ENCODE measurements at regions of chr10 and their contacts with region 1.

Region 1: DNA sequence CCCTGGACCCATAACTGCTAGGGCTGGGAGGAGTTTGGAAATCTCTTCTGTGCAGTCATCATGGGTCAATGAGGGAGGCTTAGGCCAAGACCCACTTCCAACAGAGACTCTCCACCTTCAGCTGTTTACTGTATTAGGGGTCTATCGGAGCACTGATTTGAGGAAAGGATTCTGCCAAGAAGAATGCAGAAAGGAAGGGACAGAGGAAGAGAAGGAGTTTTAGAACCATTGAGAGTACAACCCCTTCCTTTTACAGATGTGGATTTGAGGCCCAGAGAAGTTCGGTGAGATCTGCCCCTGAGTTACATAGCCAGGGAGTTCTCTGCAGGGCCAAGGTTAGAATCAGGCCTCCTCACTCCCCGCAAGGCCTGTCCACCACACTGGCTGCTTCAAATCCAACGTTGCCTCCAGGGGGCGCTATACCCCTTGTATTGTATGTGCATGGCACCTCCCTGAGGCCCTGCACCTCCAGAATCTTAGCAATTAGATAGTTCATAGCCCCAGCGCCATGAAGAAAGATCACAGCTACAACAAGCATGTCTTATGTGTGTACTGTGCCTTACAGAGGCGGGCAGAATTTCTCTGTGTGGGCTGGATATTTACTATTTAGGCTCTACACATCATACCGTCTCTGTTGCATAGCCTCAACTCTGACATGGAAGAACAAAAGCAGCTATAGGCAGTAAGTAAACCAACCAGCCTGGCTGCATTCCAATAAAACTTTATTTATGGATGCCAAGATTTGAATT is 246.8 kb downstream of the SKIDA1 start:
- DNase-seq: peak; percentile 91
- H3K4me3 ChIP-seq: no peak overlapping the region
- H3K27ac ChIP-seq: no peak overlapping the region
- H3K4me1 ChIP-seq: no peaks in the 10 kb centered on the region
- H3K27me3 ChIP-seq: no peaks in the 10 kb centered on the region

Region 2: DNA sequence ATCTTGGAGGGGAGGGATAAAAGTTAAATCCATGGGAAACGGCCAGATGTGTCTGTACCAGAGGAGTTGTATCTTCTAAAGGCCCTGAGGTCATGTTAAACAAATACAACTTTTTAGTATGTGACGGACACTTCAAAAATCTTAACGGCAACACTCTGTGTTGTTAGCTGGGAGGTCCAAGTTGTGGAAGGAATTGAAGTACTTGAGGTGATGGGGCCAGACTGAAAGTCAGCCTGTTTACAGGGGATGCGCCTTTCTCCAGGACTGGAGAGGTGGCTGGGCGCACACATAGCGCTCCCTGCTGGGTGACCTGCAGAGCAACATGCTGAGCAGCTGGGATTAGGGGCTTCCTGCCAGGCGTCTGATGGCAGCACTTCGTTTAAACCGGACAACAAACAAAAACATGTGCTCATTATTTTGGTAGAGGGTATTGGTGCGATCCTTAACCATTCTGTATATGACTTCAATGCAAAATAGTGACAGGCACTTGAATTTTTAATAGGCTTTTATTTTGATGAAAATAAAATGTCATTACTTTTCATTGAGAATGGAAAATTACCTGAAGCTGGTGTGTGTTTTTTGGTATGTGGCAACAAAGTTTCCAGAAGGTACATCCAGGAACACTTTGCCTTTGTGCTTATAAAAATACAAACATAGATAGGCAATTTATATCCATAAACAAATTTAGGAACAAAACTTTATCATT is 453.6 kb after region 1 on chr10:
- in situ Hi-C with region 1: loop called (anchors 25 kb)
- DNase-seq: peak; percentile 81
- H3K4me3 ChIP-seq: no peak overlapping the region
- H3K27ac ChIP-seq: no peak overlapping the region
- H3K4me1 ChIP-seq: peaks cover 8% of the 10 kb centered on the region
- H3K27me3 ChIP-seq: no peaks in the 10 kb centered on the region

Region 3: GRCh38 chr10:21969326-21970287 is 690.9 kb after region 1 on chr10:
- in situ Hi-C with region 1: loop called (anchors 10 kb)
- DNase-seq: peak; percentile 64
- H3K4me3 ChIP-seq: no peak overlapping the region
- H3K27ac ChIP-seq: peak overlapping the region; percentile 6
- H3K4me1 ChIP-seq: peaks cover 20% of the 10 kb centered on the region
- H3K27me3 ChIP-seq: no peaks in the 10 kb centered on the region